Activated CD4-positive, alpha-beta memory T cell treated with anti-CD3 and anti-CD28 coated beads, Interleukin-2, amount 10 ng/mL, durations not matched to agents 7 days and 5 days (primary cell): ENCODE measurements at regions of chr16 and their contacts with region 1.

Region 1: GRCh38 chr16:3059000-3059722 is 6.3 kb upstream of the IL32 start:
- DNase-seq: peak; percentile 90
- H3K4me3 Mint-ChIP-seq: peak overlapping the region; percentile 79
- H3K27ac Mint-ChIP-seq: peak overlapping the region; percentile 95
- H3K4me1 Mint-ChIP-seq: peaks cover 74% of the 10 kb centered on the region
- H3K27me3 Mint-ChIP-seq: no peaks in the 10 kb centered on the region

Region 2: GRCh38 chr16:2987839-2988238 is 71.3 kb before region 1 on chr16:
- CTCF ChIA-PET with region 1: no interaction called
- POLR2A ChIA-PET with region 1: no interaction called
- DNase-seq: no peak
- H3K4me3 Mint-ChIP-seq: no peak overlapping the region
- H3K27ac Mint-ChIP-seq: no peak overlapping the region
- H3K4me1 Mint-ChIP-seq: peaks cover 8% of the 10 kb centered on the region
- H3K27me3 Mint-ChIP-seq: peaks cover 10% of the 10 kb centered on the region

Region 3: GRCh38 chr16:3029537-3030402 is 29.4 kb before region 1 on chr16:
- CTCF ChIA-PET with region 1: interaction called, 51 read pairs
- POLR2A ChIA-PET with region 1: interaction called, 11 read pairs
- DNase-seq: peak; percentile 75
- H3K4me3 Mint-ChIP-seq: peak overlapping the region; percentile 69
- H3K27ac Mint-ChIP-seq: peak overlapping the region; percentile 67
- H3K4me1 Mint-ChIP-seq: peaks cover 46% of the 10 kb centered on the region
- H3K27me3 Mint-ChIP-seq: peaks cover 42% of the 10 kb centered on the region

Region 4: DNA sequence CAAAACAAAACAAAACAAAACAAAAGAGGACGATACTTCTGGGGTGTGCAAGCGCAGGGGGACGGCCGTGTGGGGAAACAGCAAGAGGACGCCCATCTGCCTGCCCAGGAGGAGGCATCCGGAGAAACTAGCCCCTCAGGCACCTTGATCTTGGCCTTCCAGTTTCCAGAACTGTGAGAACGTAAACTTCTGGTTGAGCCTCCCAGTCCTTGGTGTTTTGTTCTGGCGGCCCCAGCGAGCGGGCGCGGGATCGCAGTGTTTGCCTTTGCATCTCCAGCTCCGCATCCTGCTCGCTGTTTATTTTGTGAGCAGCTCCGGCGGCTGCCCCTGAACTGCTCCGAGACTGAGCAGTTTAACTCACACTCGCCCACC is 13.8 kb before region 1 on chr16:
- CTCF ChIA-PET with region 1: interaction called, 27 read pairs
- POLR2A ChIA-PET with region 1: interaction called, 65 read pairs
- DNase-seq: peak; percentile 61
- H3K4me3 Mint-ChIP-seq: peak overlapping the region; percentile 85
- H3K27ac Mint-ChIP-seq: peak overlapping the region; percentile 78
- H3K4me1 Mint-ChIP-seq: peaks cover 51% of the 10 kb centered on the region
- H3K27me3 Mint-ChIP-seq: peaks cover 24% of the 10 kb centered on the region

Region 5: GRCh38 chr16:3094289-3095027 is 35.3 kb after region 1 on chr16:
- CTCF ChIA-PET with region 1: interaction called, 16 read pairs
- POLR2A ChIA-PET with region 1: interaction called, 15 read pairs
- DNase-seq: peak; percentile 68
- H3K4me3 Mint-ChIP-seq: peak overlapping the region; percentile 1
- H3K27ac Mint-ChIP-seq: peak overlapping the region; percentile 37
- H3K4me1 Mint-ChIP-seq: peaks cover 46% of the 10 kb centered on the region
- H3K27me3 Mint-ChIP-seq: no peaks in the 10 kb centered on the region

Region 6: DNA sequence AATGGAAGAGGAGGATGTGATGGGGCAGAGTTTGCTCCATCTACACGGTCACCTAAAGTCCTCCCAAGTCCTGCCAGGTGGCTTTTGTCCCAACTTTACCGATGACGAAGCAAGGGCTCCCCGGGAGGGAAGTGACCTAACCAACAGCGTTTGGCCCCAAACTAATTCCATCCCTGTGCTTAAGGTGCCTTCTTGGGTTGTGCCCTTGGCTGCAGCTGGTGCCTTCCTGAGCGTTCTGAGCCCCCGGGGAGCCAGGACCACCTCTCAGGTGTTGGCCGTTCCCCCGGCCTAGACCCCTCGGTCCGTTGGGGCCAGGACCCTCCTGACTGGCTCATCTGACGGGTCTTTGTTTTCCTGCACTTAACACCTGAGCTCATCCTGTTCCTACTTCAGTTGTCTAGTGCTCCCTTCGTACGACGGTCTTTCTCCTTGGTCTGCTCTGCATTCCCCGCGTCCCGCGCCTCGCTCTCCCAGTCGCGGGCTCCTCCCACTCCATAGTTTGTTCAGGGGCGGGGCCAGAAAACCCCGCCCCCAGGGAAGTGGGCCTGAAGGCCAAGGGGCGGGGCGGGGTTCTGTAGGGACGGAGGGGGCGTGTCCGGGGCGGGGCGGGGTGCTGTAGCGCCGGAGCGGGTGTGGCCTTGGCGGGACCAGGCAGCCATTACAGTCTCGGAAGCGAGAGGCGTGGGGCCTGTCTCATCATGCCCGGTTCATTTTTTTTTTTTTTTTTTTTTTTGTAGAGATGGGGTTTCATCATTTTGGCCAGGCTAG is 40.8 kb after region 1 on chr16:
- CTCF ChIA-PET with region 1: interaction called, 16 read pairs
- POLR2A ChIA-PET with region 1: interaction called, 15 read pairs
- DNase-seq: peak; percentile 96
- H3K4me3 Mint-ChIP-seq: peak overlapping the region; percentile 75
- H3K27ac Mint-ChIP-seq: peak overlapping the region; percentile 80
- H3K4me1 Mint-ChIP-seq: peaks cover 66% of the 10 kb centered on the region
- H3K27me3 Mint-ChIP-seq: no peaks in the 10 kb centered on the region

Region 7: GRCh38 chr16:3123986-3124886 is 65.1 kb after region 1 on chr16:
- CTCF ChIA-PET with region 1: interaction called, 177 read pairs
- POLR2A ChIA-PET with region 1: interaction called, 100 read pairs
- DNase-seq: peak; percentile 98
- H3K4me3 Mint-ChIP-seq: peak overlapping the region; percentile 88
- H3K27ac Mint-ChIP-seq: peak overlapping the region; percentile 98
- H3K4me1 Mint-ChIP-seq: peaks cover 48% of the 10 kb centered on the region
- H3K27me3 Mint-ChIP-seq: no peaks in the 10 kb centered on the region

Region 8: GRCh38 chr16:3223913-3224515 is 164.9 kb after region 1 on chr16:
- CTCF ChIA-PET with region 1: no interaction called
- POLR2A ChIA-PET with region 1: no interaction called
- DNase-seq: no peak
- H3K4me3 Mint-ChIP-seq: no peak overlapping the region
- H3K27ac Mint-ChIP-seq: no peak overlapping the region
- H3K4me1 Mint-ChIP-seq: no peaks in the 10 kb centered on the region
- H3K27me3 Mint-ChIP-seq: no peaks in the 10 kb centered on the region